HEK293T (cell line): ENCODE measurements at regions of chr15 and their contacts with region 1.

Region 1: GRCh38 chr15:77633134-77633912 is 611 bp upstream of the LINGO1 start:
- DNase-seq: peak; percentile 94

Region 2: DNA sequence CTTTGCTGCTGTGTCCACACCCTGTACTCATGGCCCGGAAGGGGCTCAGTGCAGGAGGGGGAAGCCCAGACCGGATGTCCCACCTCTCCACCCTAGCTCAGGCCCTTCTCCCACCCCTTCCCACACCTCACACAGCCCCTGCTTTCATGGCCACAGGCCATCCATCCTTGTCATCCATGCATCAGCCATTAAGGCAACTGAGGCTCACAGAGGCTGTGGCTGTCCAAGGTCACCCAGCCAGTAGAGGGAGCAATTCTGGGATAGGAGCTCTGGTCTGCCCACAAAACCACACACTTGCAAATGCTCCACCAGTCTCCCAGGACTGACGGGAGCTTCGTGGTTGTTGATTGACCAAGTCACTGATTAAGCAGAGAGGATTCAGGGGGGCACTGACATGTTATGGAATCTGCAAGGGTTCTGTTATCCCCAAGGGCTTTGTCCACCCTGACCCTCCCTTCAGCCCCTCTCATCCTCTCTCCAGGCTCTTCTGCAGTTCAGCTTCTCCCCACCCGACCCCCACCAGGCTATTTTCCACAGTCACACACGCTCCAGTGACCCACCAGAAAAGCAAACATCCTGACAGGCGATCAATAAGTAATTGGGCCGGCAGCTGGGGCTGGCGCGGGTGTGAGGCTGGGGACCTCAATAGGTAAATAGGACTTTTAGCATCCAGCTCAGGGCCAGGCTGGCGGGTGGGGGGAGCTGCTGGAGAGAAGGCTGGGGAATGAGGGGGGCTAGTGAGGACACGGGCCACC is 15.7 kb before region 1 on chr15:
- CTCF ChIA-PET with region 1: interaction called, 13 read pairs
- POLR2A ChIA-PET with region 1: interaction called, 5 read pairs
- DNase-seq: peak; percentile 69

Region 3: GRCh38 chr15:77671363-77671986 is 38.2 kb after region 1 on chr15:
- CTCF ChIA-PET with region 1: no interaction called
- POLR2A ChIA-PET with region 1: no interaction called
- DNase-seq: no peak